ENCODE measurements at regions of chr21 and their contacts with region 1.

Region 1: DNA sequence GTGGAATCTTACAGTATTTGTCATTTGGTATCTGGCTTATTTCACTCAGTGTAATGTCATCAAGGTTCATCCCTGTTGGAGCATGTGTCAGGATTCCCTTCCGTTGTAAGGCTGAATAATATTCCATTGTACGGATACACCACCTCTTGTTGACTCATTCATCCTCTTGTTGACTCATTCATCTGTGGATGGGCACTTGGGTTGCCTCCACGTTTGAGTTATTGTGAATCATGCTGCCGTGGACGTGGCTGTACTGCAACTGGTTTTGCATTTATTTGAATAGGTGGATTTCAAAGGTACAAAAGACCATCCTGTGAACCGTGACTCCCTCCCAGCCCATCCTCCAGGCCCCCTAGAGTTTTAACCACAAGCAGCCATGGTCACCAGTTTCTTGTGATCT is 11.9 kb upstream of the TCP10L start:
- DNase-seq: peak; percentile 93
- ATAC-seq: peak; percentile 30
- H3K4me3 ChIP-seq: no peak overlapping the region
- H3K27ac ChIP-seq: peak overlapping the region; percentile 50
- H3K4me1 ChIP-seq: peaks cover 78% of the 10 kb centered on the region
- H3K27me3 ChIP-seq: no peaks in the 10 kb centered on the region
- CTCF ChIP-seq: no peak
- EP300 ChIP-seq: peak in 1 of 2 experiments; percentile 79; a peak in 2 of 4 replicates
- POLR2A ChIP-seq: no peak
- RAD21 ChIP-seq: no peak

Region 2: DNA sequence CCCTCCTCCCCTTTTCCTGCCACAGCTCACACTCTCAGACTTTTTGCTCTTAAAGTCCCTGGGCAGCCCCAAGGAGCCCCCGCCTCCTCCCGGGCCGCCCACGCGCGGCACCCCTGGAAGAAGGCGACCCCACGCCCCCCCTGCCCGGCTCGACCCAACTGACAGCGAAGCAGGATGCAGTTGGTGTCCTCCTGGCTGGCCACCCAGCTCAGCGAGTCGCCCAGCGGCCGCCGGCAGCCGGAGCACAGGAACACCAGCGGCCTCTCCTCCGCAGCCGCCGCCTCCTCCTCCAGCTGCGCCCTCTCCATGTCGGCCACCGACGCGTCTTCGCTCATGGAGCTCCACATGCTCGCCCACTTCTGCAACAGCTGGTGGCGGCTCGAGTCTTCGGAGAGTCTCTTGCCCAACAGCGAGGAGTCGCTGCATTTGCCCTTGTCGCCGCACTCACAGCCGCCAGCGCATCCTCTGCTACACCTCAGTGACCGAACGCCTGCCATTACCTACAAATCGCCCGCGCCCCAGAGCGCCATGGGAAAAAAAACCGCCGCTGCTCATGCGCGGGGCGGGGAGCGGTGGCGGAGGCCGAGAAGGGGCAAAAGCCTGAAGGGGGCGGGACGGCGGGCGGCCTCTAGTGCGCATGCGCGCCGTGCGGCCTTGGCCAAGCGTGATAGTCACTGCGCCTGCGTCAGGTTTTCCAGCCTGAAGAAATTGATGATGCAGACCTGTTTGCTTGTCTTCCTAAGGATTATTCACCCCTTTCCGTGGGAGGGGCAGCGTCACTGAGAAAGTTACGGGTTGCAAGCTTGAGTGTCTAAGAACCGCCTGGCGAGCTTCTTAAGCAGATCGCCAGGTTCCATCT is 318.5 kb before region 1 on chr21 and contains the start of gene MIS18A:
- CTCF ChIA-PET with region 1: no interaction called
- POLR2A ChIA-PET with region 1: no interaction called
- in situ Hi-C with region 1: no loop called
- intact Hi-C with region 1: loop called (anchors 5 kb)
- DNase-seq: peak; percentile 89
- ATAC-seq: peak; percentile 94
- H3K4me3 ChIP-seq: peak within 1 kb of the TSS; percentile 87 to 92 (median 92)
- H3K27ac ChIP-seq: peak within 1 kb of the TSS; percentile 68
- H3K4me1 ChIP-seq: peaks cover 27% of the 10 kb centered on the region
- H3K27me3 ChIP-seq: no peaks in the 10 kb centered on the region
- CTCF ChIP-seq: peak; percentile 42
- EP300 ChIP-seq: no peak
- POLR2A ChIP-seq: peak; percentile 55 to 89; a peak in 3 of 4 replicates
- RAD21 ChIP-seq: peak; percentile 60; the same call in 1 of the 2 replicates
- total RNA-seq, gene MIS18A: 41.4 and 58.3 TPM in 2 replicates

Region 3: GRCh38 chr21:32392880-32393676 is 204.1 kb before region 1 on chr21 and contains the start of gene URB1:
- CTCF ChIA-PET with region 1: interaction called, 4 read pairs
- POLR2A ChIA-PET with region 1: interaction called, 8 read pairs
- in situ Hi-C with region 1: no loop called
- intact Hi-C with region 1: loop called (anchors 1 kb)
- DNase-seq: peak; percentile 75
- ATAC-seq: peak; percentile 94
- H3K4me3 ChIP-seq: peak within 1 kb of the TSS; percentile 79 to 88 (median 88)
- H3K27ac ChIP-seq: peak within 1 kb of the TSS; percentile 89
- H3K4me1 ChIP-seq: peaks cover 46% of the 10 kb centered on the region
- H3K27me3 ChIP-seq: no peaks in the 10 kb centered on the region
- CTCF ChIP-seq: peak; percentile 45
- EP300 ChIP-seq: no peak
- POLR2A ChIP-seq: peak; percentile 80 to 92; a peak in 3 of 4 replicates
- RAD21 ChIP-seq: 0 out of 2 replicates have a peak, but pooled peaks have one; percentile 10
- total RNA-seq, gene URB1: 13.5 and 16.7 TPM in 2 replicates

Region 4: GRCh38 chr21:32403201-32403777 is 193.9 kb before region 1 on chr21:
- CTCF ChIA-PET with region 1: interaction called, 22 read pairs
- POLR2A ChIA-PET with region 1: interaction called, 5 read pairs
- in situ Hi-C with region 1: no loop called
- intact Hi-C with region 1: loop called (anchors 1 kb)
- DNase-seq: peak; percentile 48
- ATAC-seq: peak; percentile 92
- H3K4me3 ChIP-seq: no peak overlapping the region
- H3K27ac ChIP-seq: no peak overlapping the region
- H3K4me1 ChIP-seq: peaks cover 10% of the 10 kb centered on the region
- H3K27me3 ChIP-seq: 0 out of 5 replicates have a peak, but pooled peaks cover 0 to 4% of the 10 kb centered on the region in 2 experiments
- CTCF ChIP-seq: peak; percentile 80
- EP300 ChIP-seq: no peak
- POLR2A ChIP-seq: no peak
- RAD21 ChIP-seq: peak; percentile 52

Region 5: DNA sequence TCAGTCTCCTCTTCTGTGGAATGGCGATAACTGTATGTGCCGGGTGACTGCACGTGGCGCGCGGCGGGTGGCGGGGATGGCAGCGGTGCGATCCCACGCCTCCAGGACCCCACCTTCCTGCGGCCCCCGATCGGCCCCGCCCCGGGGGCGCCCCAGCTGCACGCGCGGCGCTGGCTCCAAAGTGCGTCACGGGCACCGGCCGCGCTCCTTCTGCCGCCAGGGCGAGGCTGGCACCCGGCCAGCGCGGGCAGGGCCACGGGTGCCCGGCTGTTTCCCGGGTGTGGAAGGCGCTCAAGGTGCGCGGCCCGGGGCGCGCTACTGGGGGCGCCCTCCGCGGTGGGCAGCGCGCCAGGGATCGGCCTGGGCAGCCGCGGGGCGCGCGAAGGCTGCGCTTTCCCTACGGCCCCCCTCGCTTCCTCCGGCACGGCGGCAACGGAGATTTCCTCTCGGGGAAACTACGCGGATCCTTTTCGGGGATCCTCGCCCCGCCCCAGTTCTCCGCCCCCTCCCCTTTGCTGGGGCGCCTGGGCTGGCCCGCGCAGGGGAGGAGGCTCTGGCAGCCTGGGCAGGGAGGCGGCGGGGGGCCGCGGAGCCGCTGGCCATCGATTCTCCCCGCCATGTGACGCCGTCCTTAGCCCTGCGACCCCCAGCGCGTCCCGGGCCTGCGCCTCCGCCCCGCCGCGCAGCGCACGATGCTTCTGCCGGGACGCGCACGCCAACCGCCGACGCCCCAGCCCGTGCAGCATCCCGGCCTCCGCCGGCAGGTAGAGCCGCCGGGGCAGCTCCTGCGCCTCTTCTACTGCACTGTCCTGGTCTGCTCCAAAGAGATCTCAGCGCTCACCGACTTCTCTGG is 184.8 kb before region 1 on chr21 and contains the start of gene EVA1C:
- CTCF ChIA-PET with region 1: interaction called, 5 read pairs
- POLR2A ChIA-PET with region 1: no interaction called
- in situ Hi-C with region 1: loop called (anchors 5 kb)
- intact Hi-C with region 1: loop called (anchors 1 kb)
- DNase-seq: no peak
- ATAC-seq: peak; percentile 89
- H3K4me3 ChIP-seq: peak within 1 kb of the TSS; percentile 21 to 69 (median 53)
- H3K27ac ChIP-seq: no peak within 1 kb of the TSS
- H3K4me1 ChIP-seq: peaks cover 19% of the 10 kb centered on the region
- H3K27me3 ChIP-seq: peaks cover 5 to 31% of the 10 kb centered on the region in 2 experiments
- CTCF ChIP-seq: no peak
- EP300 ChIP-seq: no peak
- POLR2A ChIP-seq: no peak
- RAD21 ChIP-seq: no peak
- total RNA-seq, gene EVA1C: 0.29 TPM in 1 of 2 replicates, not detected in the other

Region 6: DNA sequence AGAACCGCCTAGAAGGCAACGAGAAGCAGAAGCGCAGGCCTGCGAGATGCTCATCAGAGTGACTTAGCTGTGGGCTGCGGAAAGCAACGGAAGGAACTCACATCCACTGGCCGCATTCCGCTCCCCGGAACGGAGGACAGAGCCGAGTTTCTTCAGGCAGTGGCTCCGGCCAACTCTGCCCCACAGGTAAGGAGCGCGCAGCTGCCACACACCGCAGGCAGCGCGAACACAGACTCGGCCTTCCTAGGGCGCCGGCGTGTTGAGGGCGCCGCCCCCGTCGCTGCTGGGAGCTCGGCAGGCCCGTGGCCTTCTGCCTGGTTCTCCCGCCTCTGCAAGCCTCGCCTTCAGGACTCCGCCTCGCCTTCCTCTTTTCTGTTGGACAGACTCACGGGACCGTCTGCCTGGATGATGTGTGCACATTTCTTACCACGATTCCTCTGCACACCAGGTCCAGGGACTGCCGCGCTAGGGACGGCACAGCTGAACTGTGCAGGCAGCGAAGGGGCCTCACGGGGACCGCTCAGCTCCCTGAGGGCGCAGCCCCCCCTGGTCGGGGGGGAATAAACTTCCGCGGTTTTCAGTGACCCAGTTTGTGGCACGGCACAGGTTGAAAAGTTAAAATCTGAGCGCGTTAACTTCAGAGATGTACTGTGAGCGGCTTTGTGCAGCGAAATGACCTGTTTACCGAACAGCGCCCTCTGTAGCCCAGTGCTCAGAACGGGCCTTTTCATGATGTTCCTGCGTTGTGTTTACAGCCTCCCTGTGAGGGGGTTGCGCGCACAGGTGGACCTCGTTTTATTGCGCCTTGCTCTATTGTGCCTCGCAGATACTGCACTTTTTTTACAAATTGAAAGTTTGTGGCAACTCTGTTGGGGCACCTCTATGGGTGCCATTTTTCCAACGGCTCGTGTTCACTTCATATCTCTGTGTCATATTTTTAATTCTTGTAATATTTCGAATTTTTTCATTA is 27.7 kb before region 1 on chr21:
- CTCF ChIA-PET with region 1: interaction called, 4 read pairs
- POLR2A ChIA-PET with region 1: interaction called, 9 read pairs
- in situ Hi-C with region 1: no loop called
- intact Hi-C with region 1: loop called (anchors 1 kb)
- DNase-seq: peak; percentile 77
- ATAC-seq: peak; percentile 93
- H3K4me3 ChIP-seq: peak overlapping the region; percentile 70 to 79 (median 77)
- H3K27ac ChIP-seq: peak overlapping the region; percentile 71
- H3K4me1 ChIP-seq: peaks cover 36% of the 10 kb centered on the region
- H3K27me3 ChIP-seq: no peaks in the 10 kb centered on the region
- CTCF ChIP-seq: peak; percentile 86
- EP300 ChIP-seq: peak in 1 of 2 experiments; percentile 5; a peak in 1 of 4 replicates
- POLR2A ChIP-seq: peak; percentile 19 to 28; a peak in 1 of 4 replicates
- RAD21 ChIP-seq: peak; percentile 44

Region 7: GRCh38 chr21:33643658-33644311 is 1046.6 kb after region 1 on chr21:
- CTCF ChIA-PET with region 1: no interaction called
- POLR2A ChIA-PET with region 1: no interaction called
- in situ Hi-C with region 1: no loop called
- intact Hi-C with region 1: no loop called
- DNase-seq: peak; percentile 26
- ATAC-seq: no peak
- H3K4me3 ChIP-seq: peak overlapping the region; percentile 81 to 95 (median 85)
- H3K27ac ChIP-seq: peak overlapping the region; percentile 60
- H3K4me1 ChIP-seq: peaks cover 41% of the 10 kb centered on the region
- H3K27me3 ChIP-seq: no peaks in the 10 kb centered on the region; a peak in 1 of 5 replicates
- CTCF ChIP-seq: no peak
- EP300 ChIP-seq: no peak
- POLR2A ChIP-seq: no peak
- RAD21 ChIP-seq: no peak

Region 8: GRCh38 chr21:34202553-34203372 is 1605.6 kb after region 1 on chr21:
- CTCF ChIA-PET with region 1: no interaction called
- POLR2A ChIA-PET with region 1: no interaction called
- in situ Hi-C with region 1: no loop called
- intact Hi-C with region 1: loop called (anchors 10 kb)
- DNase-seq: no peak
- ATAC-seq: peak; percentile 42
- H3K4me3 ChIP-seq: peak overlapping the region; percentile 47 to 77 (median 61); a peak in 4 of 6 replicates
- H3K27ac ChIP-seq: peak overlapping the region; percentile 70
- H3K4me1 ChIP-seq: peaks cover 52% of the 10 kb centered on the region
- H3K27me3 ChIP-seq: no peaks in the 10 kb centered on the region
- CTCF ChIP-seq: no peak
- EP300 ChIP-seq: no peak
- POLR2A ChIP-seq: no peak
- RAD21 ChIP-seq: no peak